PC-3 (cell line): ENCODE measurements at regions of chr7 and their contacts with region 1.

Region 1: DNA sequence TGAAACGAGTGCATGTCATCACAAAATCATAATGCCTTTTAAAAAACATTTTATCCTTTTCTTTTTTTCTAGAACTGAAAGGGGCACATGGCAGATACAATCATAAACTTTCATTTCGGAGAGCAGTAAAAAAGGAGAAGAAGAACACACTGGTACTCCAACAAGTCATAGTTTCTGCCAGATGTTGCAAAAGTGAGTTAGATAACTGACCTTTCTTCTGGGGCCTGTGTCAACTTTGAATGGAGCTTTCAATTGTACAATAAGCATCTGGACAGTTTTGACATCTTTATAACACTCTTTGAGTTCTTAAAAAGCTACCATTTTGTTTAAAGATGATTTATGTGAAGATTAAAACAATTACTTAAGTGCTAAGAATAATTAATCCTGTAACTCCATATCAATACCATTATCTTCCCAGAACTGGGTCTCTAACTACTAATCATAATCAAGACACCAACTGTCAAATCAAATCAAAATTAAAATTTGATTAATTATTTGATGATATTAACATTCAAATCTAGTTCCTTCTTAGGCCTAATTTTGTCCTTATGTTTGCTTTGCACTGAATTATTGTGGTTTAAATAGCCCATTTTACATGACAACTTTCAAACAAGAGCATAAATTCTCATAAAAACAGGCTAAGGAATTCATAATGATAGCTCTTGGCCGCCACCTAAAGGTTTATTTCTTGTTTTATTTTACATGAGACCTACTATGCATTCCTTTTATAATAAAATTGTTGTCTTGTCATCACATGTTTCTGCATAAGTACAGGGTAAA is 19.5 kb upstream of the ITGB8 start:
- DNase-seq: peak; percentile 81
- ATAC-seq: peak; percentile 45; the same call in 1 of the 2 replicates
- H3K4me3 ChIP-seq: no peak overlapping the region
- H3K27ac ChIP-seq: no peak overlapping the region
- H3K4me1 ChIP-seq: no peaks in the 10 kb centered on the region
- H3K27me3 ChIP-seq: no peaks in the 10 kb centered on the region
- CTCF ChIP-seq: peak; percentile 75

Region 2: GRCh38 chr7:19754521-19755116 is 556.5 kb before region 1 on chr7:
- CTCF ChIA-PET with region 1: no interaction called
- POLR2A ChIA-PET with region 1: no interaction called
- intact Hi-C with region 1: loop called (anchors 2 kb)
- DNase-seq: peak; percentile 88
- ATAC-seq: no peak
- H3K4me3 ChIP-seq: no peak overlapping the region
- H3K27ac ChIP-seq: no peak overlapping the region
- H3K4me1 ChIP-seq: peaks cover 6% of the 10 kb centered on the region; the same call in 1 of the 2 replicates
- H3K27me3 ChIP-seq: no peaks in the 10 kb centered on the region
- CTCF ChIP-seq: peak; percentile 82

Region 3: DNA sequence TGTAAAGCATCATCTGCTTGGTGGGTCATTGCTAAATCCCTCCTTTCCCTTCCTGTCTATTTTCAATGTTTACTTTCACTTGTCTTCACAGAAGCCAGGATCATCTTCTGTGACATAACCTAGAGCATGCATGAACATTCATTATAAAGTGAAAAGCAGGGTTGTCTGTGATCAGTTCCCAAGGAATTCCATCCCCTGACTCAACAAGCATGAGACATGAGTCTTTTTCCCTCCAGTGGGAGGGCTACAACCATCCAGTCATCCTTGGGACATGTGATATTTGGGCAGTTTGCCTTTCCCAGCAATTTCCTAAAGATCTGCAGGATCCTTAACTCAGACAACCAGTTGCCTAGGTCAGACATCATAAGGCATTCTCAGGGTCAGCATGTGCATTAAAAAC is 371.4 kb before region 1 on chr7:
- CTCF ChIA-PET with region 1: no interaction called
- POLR2A ChIA-PET with region 1: no interaction called
- intact Hi-C with region 1: no loop called
- DNase-seq: peak; percentile 70
- ATAC-seq: peak; percentile 33; the same call in 1 of the 2 replicates
- H3K4me3 ChIP-seq: no peak overlapping the region
- H3K27ac ChIP-seq: peak overlapping the region; percentile 4
- H3K4me1 ChIP-seq: peaks cover 6% of the 10 kb centered on the region
- H3K27me3 ChIP-seq: no peaks in the 10 kb centered on the region
- CTCF ChIP-seq: no peak

Region 4: GRCh38 chr7:19982841-19983835 is 328.0 kb before region 1 on chr7:
- CTCF ChIA-PET with region 1: no interaction called
- POLR2A ChIA-PET with region 1: no interaction called
- intact Hi-C with region 1: loop called (anchors 1 kb)
- DNase-seq: peak; percentile 69
- ATAC-seq: peak; percentile 66
- H3K4me3 ChIP-seq: no peak overlapping the region
- H3K27ac ChIP-seq: no peak overlapping the region
- H3K4me1 ChIP-seq: no peaks in the 10 kb centered on the region
- H3K27me3 ChIP-seq: no peaks in the 10 kb centered on the region
- CTCF ChIP-seq: peak; percentile 61

Region 5: DNA sequence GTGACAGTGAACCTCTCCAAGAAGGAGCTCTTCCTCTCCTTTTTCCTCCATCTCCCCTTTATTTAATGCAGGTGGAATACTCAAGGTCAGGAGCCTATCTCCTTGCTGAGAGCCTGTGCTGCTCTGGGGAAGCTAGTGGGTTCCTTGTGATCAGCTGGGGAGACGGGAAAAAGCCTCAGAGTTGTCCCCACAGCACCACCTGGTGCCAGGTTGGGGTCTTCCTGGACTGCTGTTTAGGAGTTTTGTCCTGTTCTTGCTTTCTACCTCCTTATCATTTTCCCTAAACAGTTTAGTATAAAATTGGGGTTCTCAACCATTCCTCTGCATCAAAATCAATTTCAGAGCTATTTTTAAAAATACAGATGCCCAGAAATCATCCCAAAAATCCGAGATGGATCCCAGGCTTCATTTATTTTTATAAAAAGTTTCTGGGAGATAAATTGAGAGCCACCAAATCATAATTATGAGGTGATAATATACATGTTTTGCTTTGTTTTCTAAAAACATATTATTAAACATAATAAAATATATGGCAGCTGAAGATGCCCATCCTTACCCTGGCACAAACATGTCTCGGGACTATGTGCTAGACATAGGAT is 138.3 kb before region 1 on chr7:
- CTCF ChIA-PET with region 1: no interaction called
- POLR2A ChIA-PET with region 1: no interaction called
- intact Hi-C with region 1: loop called (anchors 1 kb)
- DNase-seq: peak; percentile 74
- ATAC-seq: peak; percentile 99
- H3K4me3 ChIP-seq: no peak overlapping the region
- H3K27ac ChIP-seq: no peak overlapping the region
- H3K4me1 ChIP-seq: no peaks in the 10 kb centered on the region
- H3K27me3 ChIP-seq: no peaks in the 10 kb centered on the region
- CTCF ChIP-seq: peak; percentile 77

Region 6: GRCh38 chr7:20343205-20343604 is 32.1 kb after region 1 on chr7:
- CTCF ChIA-PET with region 1: no interaction called
- POLR2A ChIA-PET with region 1: no interaction called
- intact Hi-C with region 1: no loop called
- DNase-seq: peak; percentile 37
- ATAC-seq: peak; percentile 30; the same call in 1 of the 2 replicates
- H3K4me3 ChIP-seq: no peak overlapping the region
- H3K27ac ChIP-seq: no peak overlapping the region
- H3K4me1 ChIP-seq: peaks cover 27% of the 10 kb centered on the region
- H3K27me3 ChIP-seq: no peaks in the 10 kb centered on the region
- CTCF ChIP-seq: peak; percentile 49